ENCODE measurements at regions of chr7 and their contacts with region 1.

Region 1: DNA sequence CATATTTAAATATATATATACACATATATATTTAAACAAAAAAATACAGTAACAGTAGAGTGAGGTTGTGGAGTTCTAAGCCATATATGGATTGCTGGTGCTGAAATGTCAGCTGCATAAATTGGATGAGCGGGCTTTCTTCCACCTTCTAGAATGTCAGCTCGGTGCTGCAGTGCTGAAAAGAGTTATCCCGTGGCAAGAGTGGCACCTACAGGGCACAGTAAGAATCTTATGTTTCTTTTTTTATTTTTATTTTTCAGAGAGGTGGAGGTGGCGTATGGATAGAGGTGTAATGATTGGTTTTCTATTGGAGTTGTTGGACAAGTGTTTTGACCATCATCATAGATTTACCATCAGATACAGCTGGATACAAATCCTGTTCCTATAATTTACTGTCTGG is 86.2 kb upstream of the DYNC1I1 start:
- DNase-seq: peak in 1 of 2 donors; percentile 55
- ATAC-seq: peak; percentile 55
- H3K4me3 ChIP-seq: no peak overlapping the region
- H3K27ac ChIP-seq: no peak overlapping the region
- H3K4me1 ChIP-seq: no peaks in the 10 kb centered on the region
- H3K27me3 ChIP-seq: no peaks in the 10 kb centered on the region

Region 2: DNA sequence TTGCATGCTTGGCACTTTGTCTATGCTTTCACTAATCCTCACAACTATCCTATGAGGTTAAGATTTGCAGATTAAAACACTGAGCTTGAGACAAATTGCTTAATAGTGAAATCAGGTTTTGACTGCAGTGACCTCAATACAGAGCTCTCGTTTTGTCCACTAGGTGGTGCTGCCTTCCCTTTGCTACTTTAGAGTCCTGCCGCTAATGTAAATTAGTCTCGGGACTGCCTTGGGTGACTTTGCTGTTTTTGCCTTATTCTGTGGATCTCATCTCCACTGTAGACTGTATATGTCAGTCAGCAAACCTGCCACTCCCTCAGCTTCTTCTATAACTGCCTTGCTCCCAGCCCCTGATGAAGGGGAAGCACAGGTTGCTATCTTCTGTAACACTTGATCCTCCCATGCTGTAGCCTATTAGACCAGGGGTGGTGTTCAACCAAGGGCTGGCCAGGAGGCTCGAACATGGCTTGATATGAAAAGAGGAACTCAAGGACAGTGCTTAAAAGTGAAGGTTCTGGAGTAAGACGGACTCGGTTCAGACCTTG is 174.3 kb before region 1 on chr7:
- intact Hi-C with region 1: loop called (anchors 5 kb)
- DNase-seq: peak in 1 of 2 donors; percentile 63
- ATAC-seq: peak; percentile 90
- H3K4me3 ChIP-seq: peak overlapping the region in 1 of 2 donors; percentile 56
- H3K27ac ChIP-seq: no peak overlapping the region
- H3K4me1 ChIP-seq: peaks cover 0 to 2% of the 10 kb centered on the region in 2 donors
- H3K27me3 ChIP-seq: no peaks in the 10 kb centered on the region

Region 3: DNA sequence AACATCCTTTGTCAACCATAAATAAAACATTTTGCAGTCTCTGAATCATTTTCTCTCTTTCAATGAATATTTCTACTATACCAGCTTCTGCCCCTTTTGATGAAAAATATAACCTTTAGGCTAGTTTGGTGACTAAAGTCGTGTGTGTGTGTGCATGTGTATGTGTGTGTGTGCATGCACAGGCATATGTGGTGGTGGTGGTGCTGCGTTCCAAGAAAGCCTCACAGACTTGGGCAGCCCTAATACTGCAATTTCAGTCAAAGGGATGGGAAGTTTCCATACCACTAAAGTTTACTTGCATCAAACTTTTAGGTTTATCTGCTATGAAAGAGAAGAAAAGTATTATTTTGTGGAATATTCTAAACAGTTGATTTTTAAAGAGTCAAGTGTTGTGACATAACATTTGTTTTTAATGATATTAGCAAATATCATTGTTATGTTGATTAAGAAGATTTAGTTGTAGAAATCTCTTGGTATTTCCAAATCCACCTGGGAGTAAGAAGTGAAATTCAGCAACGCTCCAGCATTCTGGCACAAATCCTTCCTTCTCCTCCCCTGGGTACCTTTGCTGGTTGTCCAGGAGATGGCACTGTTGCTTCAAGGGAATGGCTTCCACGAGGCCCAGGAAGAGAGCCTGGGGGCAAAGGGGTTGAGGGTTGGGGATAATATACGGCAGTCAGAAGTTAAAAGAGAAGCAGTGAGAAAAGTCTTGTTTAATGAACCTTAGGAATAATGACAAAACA is 158.9 kb before region 1 on chr7:
- intact Hi-C with region 1: loop called (anchors 1 to 2 kb)
- DNase-seq: no peak
- ATAC-seq: peak; percentile 75
- H3K4me3 ChIP-seq: no peak overlapping the region
- H3K27ac ChIP-seq: no peak overlapping the region
- H3K4me1 ChIP-seq: no peaks in the 10 kb centered on the region
- H3K27me3 ChIP-seq: no peaks in the 10 kb centered on the region

Region 4: GRCh38 chr7:95545078-95545498 is 141.0 kb before region 1 on chr7:
- intact Hi-C with region 1: loop called in 1 of 2 experiments (anchors 5 kb)
- DNase-seq: peak in 1 of 2 donors; percentile 45
- ATAC-seq: peak; percentile 90
- H3K4me3 ChIP-seq: peak overlapping the region; percentile 40 to 64
- H3K27ac ChIP-seq: no peak overlapping the region
- H3K4me1 ChIP-seq: peaks cover 4% of the 10 kb centered on the region in 2 donors
- H3K27me3 ChIP-seq: no peaks in the 10 kb centered on the region

Region 5: GRCh38 chr7:95596198-95597063 is 89.7 kb before region 1 on chr7 and contains the start of gene PDK4:
- intact Hi-C with region 1: loop called in 1 of 2 experiments (anchors 5 kb)
- DNase-seq: peak; percentile 94 to 97
- ATAC-seq: peak; percentile 97
- H3K4me3 ChIP-seq: peak within 1 kb of the TSS; percentile 79 to 94
- H3K27ac ChIP-seq: peak within 1 kb of the TSS; percentile 36 to 88
- H3K4me1 ChIP-seq: peaks cover 0 to 2% of the 10 kb centered on the region in 2 donors
- H3K27me3 ChIP-seq: no peaks in the 10 kb centered on the region
- total RNA-seq, gene PDK4: 34.1 to 294 TPM